ENCODE measurements at regions of chr18 and their contacts with region 1.

Region 1: GRCh38 chr18:79988451-79989194 is at the start of gene TXNL4A:
- DNase-seq: peak; percentile 85
- H3K4me3 Mint-ChIP-seq: peak within 1 kb of the TSS; percentile 96
- H3K27ac Mint-ChIP-seq: peak within 1 kb of the TSS; percentile 97
- H3K4me1 Mint-ChIP-seq: peaks cover 32% of the 10 kb centered on the region
- H3K27me3 Mint-ChIP-seq: peaks cover 5% of the 10 kb centered on the region
- total RNA-seq, gene TXNL4A: 190 and 198 TPM in 2 replicates

Region 2: GRCh38 chr18:79790996-79791972 is 197.3 kb before region 1 on chr18:
- intact Hi-C with region 1: loop called (anchors 10 kb)
- DNase-seq: no peak
- H3K4me3 Mint-ChIP-seq: no peak overlapping the region
- H3K27ac Mint-ChIP-seq: no peak overlapping the region
- H3K4me1 Mint-ChIP-seq: peaks cover 13% of the 10 kb centered on the region
- H3K27me3 Mint-ChIP-seq: peaks cover 51% of the 10 kb centered on the region

Region 3: DNA sequence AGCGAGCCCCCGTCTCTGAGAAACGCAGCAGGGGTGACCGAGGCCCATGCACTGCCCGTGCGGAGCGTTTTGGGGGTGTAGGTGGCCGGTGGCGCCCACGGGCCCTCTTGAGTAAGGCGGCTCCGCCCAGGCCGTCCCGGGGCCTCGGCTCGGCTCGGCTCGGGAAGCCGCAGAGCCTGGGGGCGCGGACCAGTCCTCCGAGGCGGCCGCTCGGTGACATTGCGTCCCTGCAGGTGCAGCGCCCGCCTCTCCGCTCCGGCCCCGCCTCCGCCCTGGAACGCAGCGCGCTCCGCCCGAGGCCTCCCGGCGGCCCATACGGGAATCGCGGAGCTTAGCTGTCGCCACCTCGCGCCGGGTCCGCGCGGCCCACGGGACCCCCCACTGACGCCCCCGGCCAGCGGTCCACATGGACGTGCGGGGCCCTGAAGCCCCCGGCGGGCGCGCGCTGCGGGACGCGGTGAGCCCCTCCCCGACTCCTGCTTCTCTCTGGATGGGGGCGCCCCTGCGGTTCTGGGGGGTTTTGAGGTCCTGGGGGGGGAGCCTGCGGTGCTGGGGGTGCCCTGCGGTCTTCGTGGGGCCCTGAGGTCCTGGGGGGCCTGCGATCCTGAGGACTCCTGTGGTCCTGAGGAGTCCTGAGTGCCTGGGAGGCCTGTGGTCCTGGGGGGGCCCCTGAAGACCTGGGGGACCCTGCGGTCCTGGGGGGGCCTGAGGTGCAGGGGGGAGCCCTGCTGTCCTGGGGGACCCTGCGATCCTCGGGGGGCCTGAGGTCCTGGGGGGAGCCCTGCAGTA is 24.1 kb before region 1 on chr18 and contains the start of gene HSBP1L1:
- intact Hi-C with region 1: loop called (anchors 1 kb)
- DNase-seq: peak; percentile 66
- H3K4me3 Mint-ChIP-seq: peak within 1 kb of the TSS; percentile 84
- H3K27ac Mint-ChIP-seq: peak within 1 kb of the TSS; percentile 68
- H3K4me1 Mint-ChIP-seq: peaks cover 33% of the 10 kb centered on the region
- H3K27me3 Mint-ChIP-seq: no peaks in the 10 kb centered on the region
- total RNA-seq, gene HSBP1L1: 9.0 and 10.0 TPM in 2 replicates

Region 4: DNA sequence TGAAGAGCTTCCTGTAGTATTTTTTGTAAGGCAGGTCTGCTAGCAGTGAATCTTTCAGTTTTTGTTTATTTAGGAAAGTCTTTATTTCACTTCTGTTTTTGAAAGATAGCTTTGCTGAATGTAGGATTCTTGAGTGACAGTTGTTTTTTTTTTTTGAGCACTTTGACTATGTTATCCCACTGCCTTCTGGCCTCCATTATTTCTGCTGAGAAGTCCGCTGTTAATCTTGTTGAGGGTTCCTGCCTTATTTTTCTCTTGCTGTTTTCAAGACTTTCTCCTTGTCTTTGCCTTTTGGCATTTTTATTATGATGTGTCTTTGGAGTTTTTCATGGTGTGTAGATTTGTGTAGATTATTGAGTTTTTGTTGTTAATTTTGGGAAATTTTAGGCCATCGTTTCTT is 67.5 kb after region 1 on chr18:
- intact Hi-C with region 1: no loop called
- DNase-seq: no peak
- H3K4me3 Mint-ChIP-seq: no peak overlapping the region
- H3K27ac Mint-ChIP-seq: no peak overlapping the region
- H3K4me1 Mint-ChIP-seq: no peaks in the 10 kb centered on the region
- H3K27me3 Mint-ChIP-seq: no peaks in the 10 kb centered on the region

Region 5: DNA sequence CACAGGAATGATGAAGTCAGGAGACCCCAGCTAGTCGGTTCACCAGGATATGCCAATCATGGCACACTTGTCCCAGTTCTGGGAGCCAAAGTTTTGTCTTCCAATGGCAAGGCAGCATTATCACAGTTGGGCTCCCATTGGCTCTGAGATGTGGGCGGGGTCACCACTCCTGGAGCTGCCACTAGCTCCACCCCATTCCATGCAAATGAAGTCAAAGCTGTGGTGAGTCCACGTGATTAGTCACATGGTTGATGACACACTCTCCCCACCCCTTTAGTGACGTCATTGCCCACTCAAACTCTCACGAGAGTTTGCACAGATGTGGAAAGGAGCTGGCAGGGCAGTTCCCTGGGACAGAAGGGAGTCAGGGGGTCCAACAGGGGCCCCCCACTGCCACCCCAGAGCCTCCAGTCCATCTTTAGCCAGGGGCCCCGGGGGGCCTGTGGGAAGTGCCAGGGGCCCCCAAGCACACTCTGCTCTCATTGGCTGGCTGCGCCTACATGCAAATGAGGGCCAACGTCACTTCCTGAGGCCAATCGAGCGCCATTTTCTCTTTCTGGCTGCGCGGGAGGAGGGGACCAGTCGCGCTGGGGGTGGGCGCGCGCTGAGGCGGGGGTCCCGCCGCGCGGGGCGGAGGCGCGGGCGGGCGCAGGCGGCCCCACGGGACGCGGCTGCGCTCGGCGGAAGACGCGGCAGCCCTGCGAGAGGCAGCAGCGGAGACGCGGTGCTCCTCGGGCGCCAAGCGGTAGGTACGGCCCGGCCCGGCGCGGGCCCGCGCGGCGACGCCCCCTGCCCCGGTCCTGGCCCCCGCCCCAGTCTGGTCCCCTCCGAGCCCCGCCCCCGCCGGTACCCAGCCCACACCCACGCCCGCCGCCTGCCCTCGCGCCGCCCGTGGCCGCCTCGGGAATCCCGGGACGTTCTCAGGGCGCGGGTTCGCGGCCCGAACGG is 120.4 kb after region 1 on chr18 and contains the start of gene ADNP2:
- intact Hi-C with region 1: loop called (anchors 1 kb)
- DNase-seq: peak; percentile 81
- H3K4me3 Mint-ChIP-seq: peak within 1 kb of the TSS; percentile 86
- H3K27ac Mint-ChIP-seq: peak within 1 kb of the TSS; percentile 86
- H3K4me1 Mint-ChIP-seq: peaks cover 24% of the 10 kb centered on the region
- H3K27me3 Mint-ChIP-seq: peaks cover 6% of the 10 kb centered on the region
- total RNA-seq, gene ADNP2: 29.0 TPM in 2 replicates

Measured in activated T-helper 1 cell treated with anti-CD3 and anti-CD28 coated beads, Interleukin-12 subunit alpha, Interleukin-12 subunit beta, Interleukin-2, Interleukin-4 antibody, amounts not matched to agents 30 ng/mL and 10 ng/mL and 1 ng/mL, durations not matched to agents 14 hours and 24 hours and 36 hours (primary cell).